Natural killer cell (primary cell): ENCODE measurements at regions of chr19 and their contacts with region 1.

Region 1: DNA sequence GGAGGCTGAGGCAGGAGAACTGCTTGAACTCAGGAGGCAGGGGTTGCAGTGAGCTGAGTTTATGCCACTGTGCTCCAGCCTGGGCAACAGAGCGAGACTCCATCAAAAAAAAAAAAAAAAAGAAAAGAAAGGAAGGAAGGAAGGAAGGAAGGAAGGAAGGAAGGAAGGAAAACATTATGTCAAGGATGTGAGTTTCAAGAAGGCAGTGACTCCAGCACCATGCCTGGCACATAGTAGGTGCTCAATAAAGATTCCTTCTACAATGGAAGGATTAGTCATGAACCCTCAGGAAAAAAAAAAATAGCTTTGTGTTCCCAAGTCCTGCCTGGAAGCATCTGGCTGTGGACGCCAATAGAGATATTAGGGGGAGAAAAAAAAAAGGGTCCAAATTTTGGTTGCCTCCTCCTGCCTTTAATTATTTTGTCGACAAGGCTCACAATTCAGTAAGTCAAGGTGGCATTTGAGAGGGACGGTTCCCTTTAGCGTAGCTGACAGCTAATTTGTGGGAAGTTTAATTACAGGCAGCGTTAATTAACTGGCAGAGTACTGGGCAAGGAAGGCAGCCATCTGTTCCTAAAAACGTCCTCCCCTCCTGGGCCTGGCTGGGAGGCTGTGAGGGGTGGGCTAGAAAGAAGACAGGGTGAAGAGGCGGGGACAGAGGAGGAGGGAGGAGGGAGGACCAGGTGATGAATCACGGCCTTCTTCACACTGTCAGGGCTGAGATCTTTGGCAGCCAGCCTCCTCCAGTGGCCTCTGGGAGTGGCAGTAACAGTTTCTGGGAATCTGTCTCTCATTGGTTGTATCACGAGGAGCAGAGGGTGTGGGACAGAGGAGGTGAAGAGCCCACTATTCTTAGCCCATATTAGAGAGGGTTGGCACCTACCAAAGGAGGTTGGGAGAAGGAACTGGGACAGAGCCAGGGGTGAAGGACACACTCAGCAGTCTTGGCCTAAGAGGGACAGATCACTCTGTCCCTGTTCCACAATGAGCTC is 9.8 kb upstream of the ZNRF4 start:
- DNase-seq: no peak
- ATAC-seq: no peak
- H3K4me3 ChIP-seq: no peak overlapping the region
- H3K4me3 Mint-ChIP-seq: no peak overlapping the region
- H3K27ac ChIP-seq: no peak overlapping the region
- H3K27ac Mint-ChIP-seq: no peak overlapping the region
- H3K4me1 ChIP-seq: no peaks in the 10 kb centered on the region
- H3K4me1 Mint-ChIP-seq: no peaks in the 10 kb centered on the region
- H3K27me3 ChIP-seq: no peaks in the 10 kb centered on the region
- H3K27me3 Mint-ChIP-seq: peaks cover 7 to 13% of the 10 kb centered on the region in 2 donors
- CTCF ChIP-seq: no peak

Region 2: DNA sequence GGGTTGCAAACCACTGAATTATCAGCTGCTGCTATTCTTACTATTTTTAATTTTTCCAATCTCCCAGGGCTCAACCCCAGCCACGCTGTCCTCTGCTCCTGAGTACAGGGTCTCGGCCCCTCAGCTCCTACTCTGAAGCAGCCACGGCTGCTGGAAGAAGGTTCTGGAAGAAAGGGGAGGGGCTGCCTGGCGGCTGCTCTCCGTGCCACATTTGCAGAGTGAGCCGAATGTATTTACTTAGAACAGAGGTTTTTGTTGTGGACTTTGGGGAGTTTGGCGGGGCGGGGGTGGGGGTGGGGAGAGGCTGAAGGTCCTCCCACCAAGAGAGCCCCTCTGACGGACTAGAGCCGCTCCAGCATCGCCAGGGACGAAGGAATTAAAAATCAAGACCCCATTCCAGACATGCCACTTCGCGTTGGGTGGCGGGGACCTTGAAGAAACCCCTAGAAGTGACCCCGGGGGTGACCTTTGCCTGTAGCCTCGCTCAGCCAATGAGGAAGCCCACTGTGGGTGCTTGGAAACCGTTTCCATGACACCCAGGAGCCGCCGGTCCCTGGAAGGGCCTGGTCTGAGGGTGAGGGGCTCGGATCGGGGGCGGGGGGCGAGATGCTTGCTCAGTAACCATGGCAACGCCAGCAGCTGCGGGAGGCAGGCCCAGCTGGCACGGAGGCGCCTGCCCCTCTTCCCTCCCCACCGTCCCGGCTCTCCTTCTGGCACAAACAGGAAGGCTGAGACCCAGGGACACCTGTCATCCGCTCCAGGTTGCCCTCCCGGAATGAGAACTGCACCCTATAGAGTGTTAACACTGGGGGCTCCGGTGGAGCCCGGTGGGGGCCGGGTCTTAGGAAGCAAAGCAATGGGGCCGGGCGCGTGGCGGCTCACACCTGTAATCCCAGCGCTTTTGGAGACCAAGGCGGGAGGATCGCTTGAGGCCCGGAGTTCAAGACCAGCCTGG is 50.5 kb before region 1 on chr19:
- intact Hi-C with region 1: no loop called
- DNase-seq: no peak
- ATAC-seq: no peak
- H3K4me3 ChIP-seq: no peak overlapping the region
- H3K4me3 Mint-ChIP-seq: no peak overlapping the region
- H3K27ac ChIP-seq: no peak overlapping the region
- H3K27ac Mint-ChIP-seq: no peak overlapping the region
- H3K4me1 ChIP-seq: no peaks in the 10 kb centered on the region
- H3K4me1 Mint-ChIP-seq: no peaks in the 10 kb centered on the region
- H3K27me3 ChIP-seq: peaks cover 17% of the 10 kb centered on the region
- H3K27me3 Mint-ChIP-seq: peaks cover 26 to 38% of the 10 kb centered on the region in 2 donors
- CTCF ChIP-seq: no peak

Region 3: GRCh38 chr19:5425260-5425659 is 20.1 kb before region 1 on chr19:
- intact Hi-C with region 1: loop called (anchors 1 kb)
- DNase-seq: no peak
- ATAC-seq: no peak
- H3K4me3 ChIP-seq: no peak overlapping the region
- H3K4me3 Mint-ChIP-seq: no peak overlapping the region
- H3K27ac ChIP-seq: no peak overlapping the region
- H3K27ac Mint-ChIP-seq: no peak overlapping the region
- H3K4me1 ChIP-seq: no peaks in the 10 kb centered on the region
- H3K4me1 Mint-ChIP-seq: no peaks in the 10 kb centered on the region
- H3K27me3 ChIP-seq: no peaks in the 10 kb centered on the region
- H3K27me3 Mint-ChIP-seq: peaks cover 17 to 22% of the 10 kb centered on the region in 2 donors
- CTCF ChIP-seq: no peak